Activated naive CD4-positive, alpha-beta T cell treated with anti-CD3 and anti-CD28 coated beads for 36 hours (primary cell): ENCODE measurements at regions of chr1 and their contacts with region 1.

Region 1: DNA sequence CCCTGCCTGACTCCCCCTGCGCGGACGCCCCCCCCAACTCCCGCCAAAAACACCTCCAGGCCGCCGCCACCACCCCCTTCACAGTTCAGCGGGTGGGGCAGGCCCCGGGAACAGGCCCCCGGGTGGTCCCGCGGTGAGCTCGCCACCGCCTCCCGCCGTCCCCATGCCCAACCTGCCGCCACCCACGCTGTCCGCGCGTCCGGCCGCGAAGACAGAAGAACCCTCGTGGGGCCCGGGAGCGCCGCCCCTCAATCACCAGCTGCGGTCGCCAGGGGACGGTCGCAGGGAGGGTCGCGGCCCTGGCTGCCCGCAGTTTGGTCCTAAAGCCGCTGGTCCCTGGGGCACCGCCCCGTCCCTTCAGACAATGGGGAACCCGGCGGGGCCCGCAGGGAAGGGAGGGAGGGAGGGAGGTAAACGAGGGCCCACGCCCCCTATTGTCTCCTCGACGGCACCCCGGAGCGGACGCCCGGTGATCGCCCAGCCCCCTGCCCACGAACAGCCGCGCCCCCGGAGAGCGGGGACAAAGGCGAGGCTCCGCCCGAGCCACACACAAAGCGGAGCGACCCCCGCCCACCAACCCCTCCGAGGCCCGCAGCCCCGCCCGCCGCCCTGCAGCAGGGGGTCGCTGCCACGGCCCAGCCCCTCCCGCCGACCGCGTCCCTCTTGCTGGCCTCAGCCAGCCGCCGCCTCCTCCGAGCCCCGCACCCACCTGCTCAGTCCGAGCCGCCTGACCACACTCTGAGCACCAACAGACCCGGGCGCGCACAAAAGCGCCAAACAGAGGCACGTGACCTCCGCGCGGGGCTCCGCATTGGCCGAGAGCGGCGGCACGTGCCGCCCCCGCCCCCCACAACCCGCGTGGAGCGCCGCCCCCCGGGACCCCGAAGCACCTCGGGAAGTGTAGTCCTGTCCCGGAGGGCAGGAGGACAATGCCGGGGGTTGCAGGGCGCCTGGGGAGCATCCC is at the start of gene STMN1:
- DNase-seq: peak; percentile 94
- H3K4me3 Mint-ChIP-seq: peak within 1 kb of the TSS; percentile 94
- H3K27ac Mint-ChIP-seq: peak within 1 kb of the TSS; percentile 90
- H3K4me1 Mint-ChIP-seq: peaks cover 29% of the 10 kb centered on the region
- H3K27me3 Mint-ChIP-seq: no peaks in the 10 kb centered on the region
- total RNA-seq, gene STMN1: 708 to 746 TPM

Region 2: GRCh38 chr1:25874934-25875855 is 30.8 kb before region 1 on chr1 and contains the start of gene PAQR7:
- CTCF ChIA-PET with region 1: no interaction called
- intact Hi-C with region 1: loop called (anchors 1 kb)
- DNase-seq: peak; percentile 58
- H3K4me3 Mint-ChIP-seq: peak within 1 kb of the TSS; percentile 84
- H3K27ac Mint-ChIP-seq: peak within 1 kb of the TSS; percentile 18
- H3K4me1 Mint-ChIP-seq: peaks cover 8% of the 10 kb centered on the region
- H3K27me3 Mint-ChIP-seq: no peaks in the 10 kb centered on the region
- total RNA-seq, gene PAQR7: 2.8 to 3.1 TPM

Region 3: DNA sequence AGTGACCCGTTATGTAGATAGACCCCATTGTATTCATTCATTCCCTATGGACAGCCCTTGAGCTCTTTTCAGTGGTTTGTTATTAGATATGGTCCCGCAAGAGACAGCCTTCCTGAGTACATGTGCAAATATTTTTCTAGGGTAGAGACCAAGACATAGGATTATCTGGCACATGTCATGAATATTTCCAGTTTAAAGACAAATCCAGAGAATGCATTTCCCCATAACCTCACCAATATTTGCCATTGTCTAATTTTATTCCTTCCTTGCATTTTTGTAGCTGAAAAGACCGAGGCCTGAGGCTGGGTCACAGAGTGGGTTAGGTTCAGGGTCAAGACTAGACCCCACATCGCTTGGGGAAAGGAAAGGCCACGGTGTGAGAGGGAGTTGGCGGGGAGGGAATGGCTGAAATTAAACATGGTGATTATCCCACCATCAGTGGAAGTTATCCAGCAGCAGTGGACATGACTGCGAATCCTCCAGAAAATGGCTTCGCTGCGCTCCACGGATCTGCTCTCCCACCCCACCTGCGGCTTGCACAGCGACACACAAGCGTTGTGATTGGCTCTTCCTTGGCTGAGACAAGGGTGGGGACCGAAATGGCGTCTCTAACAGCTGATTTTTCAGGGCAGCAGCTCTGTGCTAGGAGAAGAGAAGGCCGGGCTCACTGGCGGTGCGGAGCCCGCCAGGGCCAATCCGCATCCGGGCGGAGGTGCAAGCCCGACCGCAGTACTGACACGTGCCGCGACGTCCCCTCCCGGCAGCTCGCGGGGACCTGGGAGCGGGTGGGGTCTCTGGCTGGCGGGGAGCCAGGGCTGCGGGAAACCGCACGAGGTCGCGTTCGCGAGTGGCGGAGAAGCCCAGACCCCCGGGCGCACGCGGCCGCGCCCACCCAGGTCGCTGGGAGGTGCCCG is 16.4 kb after region 1 on chr1:
- CTCF ChIA-PET with region 1: interaction called, 5 read pairs
- intact Hi-C with region 1: loop called (anchors 1 kb)
- DNase-seq: peak; percentile 60
- H3K4me3 Mint-ChIP-seq: peak overlapping the region; percentile 70
- H3K27ac Mint-ChIP-seq: no peak overlapping the region
- H3K4me1 Mint-ChIP-seq: peaks cover 27% of the 10 kb centered on the region
- H3K27me3 Mint-ChIP-seq: peaks cover 2% of the 10 kb centered on the region

Region 4: GRCh38 chr1:26111530-26112406 is 205.8 kb after region 1 on chr1 and contains the start of gene PDIK1L:
- CTCF ChIA-PET with region 1: no interaction called
- intact Hi-C with region 1: loop called (anchors 2 kb)
- DNase-seq: peak; percentile 94
- H3K4me3 Mint-ChIP-seq: peak within 1 kb of the TSS; percentile 96
- H3K27ac Mint-ChIP-seq: peak within 1 kb of the TSS; percentile 90
- H3K4me1 Mint-ChIP-seq: peaks cover 28% of the 10 kb centered on the region
- H3K27me3 Mint-ChIP-seq: no peaks in the 10 kb centered on the region
- total RNA-seq, gene PDIK1L: 20.5 to 21.4 TPM